Activated T-helper 1 cell treated with anti-CD3 and anti-CD28 coated beads, Interleukin-12 subunit alpha, Interleukin-12 subunit beta, Interleukin-2, Interleukin-4 antibody, amounts not matched to agents 30 ng/mL and 10 ng/mL and 1 ng/mL, durations not matched to agents 14 hours and 24 hours and 36 hours (primary cell): ENCODE measurements at regions of chr19 and their contacts with region 1.

Region 1: DNA sequence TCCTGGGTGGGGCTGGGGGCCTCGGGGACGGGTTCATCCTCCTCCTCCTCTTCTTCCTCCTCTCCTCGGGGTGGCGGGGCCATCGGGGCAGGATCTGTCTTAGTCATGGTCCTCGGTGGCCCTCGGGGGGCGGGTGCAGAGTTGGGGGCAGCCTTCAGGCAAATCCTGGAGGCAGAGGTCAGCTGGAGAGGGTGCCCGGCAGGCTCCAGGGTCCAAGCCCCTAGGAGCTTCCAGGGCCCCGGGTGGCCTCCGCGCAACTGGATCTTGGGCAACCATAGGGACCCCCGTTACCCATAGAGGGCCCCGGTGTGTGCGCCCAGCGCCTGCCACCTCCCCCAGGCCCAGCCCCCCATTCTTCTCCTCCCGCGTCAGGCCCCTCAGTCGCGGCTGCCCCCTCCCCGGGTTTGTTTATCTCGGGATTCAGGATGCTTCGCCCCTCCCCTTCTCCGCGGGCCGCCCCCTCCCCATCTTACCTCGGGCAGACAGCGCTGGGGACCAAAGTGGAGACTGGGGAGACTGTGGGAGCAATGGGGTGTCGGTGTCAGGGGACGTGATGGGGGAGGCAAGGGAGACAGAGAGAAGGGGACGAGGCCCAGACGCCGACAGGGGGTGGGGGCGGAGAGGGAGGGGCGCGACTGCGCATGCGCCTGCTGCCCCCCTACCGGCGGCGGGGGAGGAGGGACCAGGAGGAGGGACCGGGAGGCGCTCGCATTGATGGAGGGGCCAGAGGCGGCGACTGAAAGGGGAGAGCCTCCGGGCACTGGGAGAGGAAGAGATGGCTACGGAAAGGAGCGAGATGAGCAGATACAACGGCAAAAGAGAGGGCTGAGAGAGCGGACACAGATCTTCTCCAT is at the start of gene CLIP3:
- DNase-seq: peak; percentile 33
- H3K4me3 Mint-ChIP-seq: peak within 1 kb of the TSS; percentile 73
- H3K27ac Mint-ChIP-seq: peak within 1 kb of the TSS; percentile 19
- H3K4me1 Mint-ChIP-seq: peaks cover 35% of the 10 kb centered on the region
- H3K27me3 Mint-ChIP-seq: no peaks in the 10 kb centered on the region
- total RNA-seq, gene CLIP3: 2.2 and 4.4 TPM in 2 replicates

Region 2: DNA sequence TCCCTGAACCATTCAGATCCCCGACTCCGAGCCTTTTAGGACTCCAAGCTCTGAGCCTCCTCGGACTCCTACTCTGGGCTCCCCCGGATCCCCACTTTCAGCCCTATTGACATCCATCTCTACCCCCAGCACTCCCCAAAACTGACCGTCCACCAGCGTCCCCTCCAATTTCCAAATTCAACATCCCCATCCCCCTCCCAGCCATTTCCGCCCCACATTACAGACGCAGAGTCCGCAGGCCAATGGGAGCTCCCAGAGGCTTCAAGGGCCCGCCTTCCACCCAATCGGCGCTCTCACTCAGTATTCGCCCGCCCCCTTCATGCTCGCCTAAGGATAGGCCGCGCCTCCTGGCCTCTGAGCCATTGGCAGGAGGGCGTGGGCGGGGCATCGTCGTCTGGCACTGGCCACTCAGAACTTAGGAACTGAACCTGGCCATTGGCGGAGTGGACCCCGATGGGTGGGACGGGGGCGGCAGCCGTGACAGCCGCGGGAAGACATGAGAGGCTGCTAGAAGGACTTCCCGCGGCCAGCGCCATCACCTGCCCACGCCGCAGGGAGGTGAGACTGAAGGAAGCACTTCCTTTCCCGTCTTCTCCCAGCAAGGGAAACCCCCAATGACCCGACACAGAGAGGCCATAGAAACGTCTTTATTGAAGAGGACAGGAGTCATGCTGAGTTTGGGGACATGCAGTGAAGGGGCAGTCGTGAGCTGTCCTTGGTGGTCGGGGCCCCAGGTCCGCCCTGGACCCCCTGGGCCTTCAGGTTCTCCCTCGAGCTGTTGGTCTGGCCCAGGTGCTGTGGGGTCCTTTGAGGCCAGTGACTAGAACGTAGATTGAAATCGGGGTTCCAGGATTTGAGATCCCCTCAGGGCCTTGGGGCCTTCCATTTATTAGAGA is 18.2 kb before region 1 on chr19 and contains the start of gene ALKBH6:
- intact Hi-C with region 1: loop called (anchors 2 kb)
- DNase-seq: peak; percentile 100
- H3K4me3 Mint-ChIP-seq: peak within 1 kb of the TSS; percentile 98
- H3K27ac Mint-ChIP-seq: peak within 1 kb of the TSS; percentile 96
- H3K4me1 Mint-ChIP-seq: peaks cover 46% of the 10 kb centered on the region
- H3K27me3 Mint-ChIP-seq: no peaks in the 10 kb centered on the region
- total RNA-seq, gene ALKBH6: 48.3 and 60.6 TPM in 2 replicates